Right lobe of liver (tissue), 6 donors: ENCODE measurements at regions of chr1 and their contacts with region 1.

Region 1: DNA sequence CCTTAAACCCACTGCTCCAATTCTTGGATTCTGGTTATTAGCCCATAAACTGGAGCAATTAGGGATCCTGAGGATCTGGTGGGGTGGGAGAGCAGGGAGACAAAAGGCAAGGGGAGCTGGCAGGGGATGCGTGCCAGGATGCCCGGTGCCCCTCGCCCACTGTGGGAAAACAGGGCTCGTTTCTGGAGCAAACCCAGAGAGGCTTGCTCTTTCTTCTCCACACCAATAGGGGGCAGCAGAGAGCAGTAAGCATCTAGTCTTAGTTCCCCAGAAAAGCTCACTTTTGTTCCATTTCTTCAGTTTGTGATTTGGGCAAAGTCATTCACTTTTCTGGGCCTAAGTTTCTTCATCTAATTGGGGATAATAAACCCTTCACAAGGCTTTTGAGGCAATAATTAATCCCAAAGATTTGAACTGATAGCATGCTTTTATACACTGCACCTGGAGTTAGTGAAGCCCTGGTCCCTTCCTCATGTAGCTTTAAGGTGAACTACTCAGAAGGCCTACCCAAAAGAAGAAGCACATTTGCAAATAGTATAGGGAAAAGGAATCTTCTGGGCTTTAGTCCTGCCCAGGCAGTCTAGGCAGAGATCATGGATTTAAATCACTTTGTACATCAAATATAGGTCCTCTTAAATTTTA is 160.6 kb upstream of the USP24 start:
- DNase-seq: peak in 1 of 3 donors; percentile 52
- ATAC-seq: peak; percentile 67 to 84 (median 79)
- H3K4me3 ChIP-seq: no peak overlapping the region
- H3K27ac ChIP-seq: no peak overlapping the region
- H3K4me1 ChIP-seq: no peaks in the 10 kb centered on the region
- H3K27me3 ChIP-seq: no peaks in the 10 kb centered on the region
- CTCF ChIP-seq: peak; percentile 85 to 96 (median 94)
- POLR2A ChIP-seq: no peak

Region 2: DNA sequence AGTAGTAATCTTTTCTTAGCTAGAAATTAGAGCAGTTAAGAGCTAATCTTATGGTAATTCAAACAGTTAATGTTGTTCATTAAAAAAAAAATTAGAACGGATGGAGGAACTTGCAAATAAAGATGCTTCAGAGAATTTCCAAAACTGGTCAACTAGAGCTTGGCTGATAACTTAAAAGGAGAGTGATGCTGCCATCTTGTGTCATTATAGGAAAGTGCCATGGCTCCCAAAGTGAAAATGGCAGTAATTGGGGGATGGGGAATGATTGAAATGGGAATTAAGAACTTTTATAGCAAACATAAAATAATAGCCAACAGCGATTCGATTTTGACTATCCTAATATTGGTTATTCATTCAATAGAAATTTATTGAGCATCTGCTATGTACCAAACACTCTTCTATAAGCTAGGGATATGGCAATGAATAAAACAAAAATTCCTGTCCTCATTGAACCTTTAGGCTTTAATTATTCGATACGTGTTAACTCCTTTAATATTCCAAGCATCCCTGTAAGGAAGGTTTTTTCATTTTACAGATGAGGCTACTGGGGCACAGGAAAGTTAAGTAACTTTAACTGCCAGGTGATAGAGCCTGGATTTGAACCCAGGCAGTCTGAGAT is 1209.3 kb after region 1 on chr1:
- intact Hi-C with region 1: loop called in 1 of 2 experiments (anchors 10 kb)
- DNase-seq: no peak
- ATAC-seq: peak; percentile 83 to 91 (median 88)
- H3K4me3 ChIP-seq: no peak overlapping the region
- H3K27ac ChIP-seq: no peak overlapping the region
- H3K4me1 ChIP-seq: peaks cover 0 to 15% (median 2%) of the 10 kb centered on the region in 4 donors
- H3K27me3 ChIP-seq: no peaks in the 10 kb centered on the region
- CTCF ChIP-seq: peak; percentile 84 to 89 (median 86)
- POLR2A ChIP-seq: no peak